ENCODE measurements at regions of chr11 and their contacts with region 1.

Region 1: GRCh38 chr11:62753736-62754603 is at the start of gene ZBTB3:
- DNase-seq: peak; percentile 99
- ATAC-seq: peak; percentile 96
- H3K4me3 ChIP-seq: peak within 1 kb of the TSS; percentile 55 to 86 (median 81)
- H3K27ac ChIP-seq: peak within 1 kb of the TSS; percentile 75
- H3K4me1 ChIP-seq: peaks cover 35% of the 10 kb centered on the region
- H3K27me3 ChIP-seq: no peaks in the 10 kb centered on the region
- CTCF ChIP-seq: peak; percentile 29; the same call in 1 of the 2 replicates
- EP300 ChIP-seq: no peak
- POLR2A ChIP-seq: peak; percentile 83 to 88
- RAD21 ChIP-seq: no peak; the same call in 1 of the 2 replicates
- total RNA-seq, gene ZBTB3: 4.0 and 5.2 TPM in 2 replicates

Region 2: DNA sequence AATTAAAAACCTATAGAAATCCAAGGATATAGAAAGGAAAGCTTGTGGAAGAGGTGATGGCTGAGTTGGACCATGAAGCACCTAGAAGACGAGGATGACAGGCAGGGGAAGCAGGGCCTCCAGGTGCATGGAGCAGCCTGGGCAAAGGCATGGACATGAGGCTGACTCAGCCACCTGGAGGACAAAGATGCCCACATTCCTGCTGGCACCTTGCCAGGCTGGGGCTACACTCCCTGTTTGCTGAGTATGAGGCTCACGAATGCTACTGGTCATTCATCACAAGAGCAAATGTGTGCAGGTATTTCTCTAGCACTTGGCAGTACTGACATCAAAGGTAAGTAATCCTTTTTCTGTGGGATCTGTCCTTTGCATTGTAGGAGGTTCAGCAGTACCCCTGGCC is 552.6 kb before region 1 on chr11:
- CTCF ChIA-PET with region 1: no interaction called
- POLR2A ChIA-PET with region 1: no interaction called
- in situ Hi-C with region 1: no loop called
- intact Hi-C with region 1: no loop called
- DNase-seq: no peak
- ATAC-seq: no peak
- H3K4me3 ChIP-seq: no peak overlapping the region
- H3K27ac ChIP-seq: no peak overlapping the region
- H3K4me1 ChIP-seq: no peaks in the 10 kb centered on the region
- H3K27me3 ChIP-seq: peaks cover 0 to 39% of the 10 kb centered on the region in 2 experiments
- CTCF ChIP-seq: no peak
- EP300 ChIP-seq: no peak
- POLR2A ChIP-seq: no peak
- RAD21 ChIP-seq: no peak

Region 3: DNA sequence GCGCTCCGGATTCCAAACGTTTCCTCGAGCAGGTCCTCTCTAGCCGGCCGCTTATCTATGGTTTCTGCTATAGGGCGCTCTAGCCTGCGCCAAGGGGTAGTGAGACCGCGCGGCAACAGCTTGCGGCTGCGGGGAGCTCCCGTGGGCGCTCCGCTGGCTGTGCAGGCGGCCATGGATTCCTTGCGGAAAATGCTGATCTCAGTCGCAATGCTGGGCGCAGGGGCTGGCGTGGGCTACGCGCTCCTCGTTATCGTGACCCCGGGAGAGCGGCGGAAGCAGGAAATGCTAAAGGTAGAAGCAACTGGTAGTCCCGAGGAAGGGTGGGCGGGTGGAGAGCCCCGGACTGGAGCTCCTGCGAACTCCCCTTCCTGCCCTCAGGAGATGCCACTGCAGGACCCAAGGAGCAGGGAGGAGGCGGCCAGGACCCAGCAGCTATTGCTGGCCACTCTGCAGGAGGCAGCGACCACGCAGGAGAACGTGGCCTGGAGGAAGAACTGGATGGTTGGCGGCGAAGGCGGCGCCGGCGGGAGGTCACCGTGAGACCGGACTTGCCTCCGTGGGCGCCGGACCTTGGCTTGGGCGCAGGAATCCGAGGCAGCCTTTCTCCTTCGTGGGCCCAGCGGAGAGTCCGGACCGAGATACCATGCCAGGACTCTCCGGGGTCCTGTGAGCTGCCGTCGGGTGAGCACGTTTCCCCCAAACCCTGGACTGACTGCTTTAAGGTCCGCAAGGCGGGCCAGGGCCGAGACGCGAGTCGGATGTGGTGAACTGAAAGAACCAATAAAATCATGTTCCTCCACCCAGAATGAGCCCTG is 82.2 kb before region 1 on chr11 and contains the starts of genes LBHD1 and UQCC3:
- CTCF ChIA-PET with region 1: no interaction called
- POLR2A ChIA-PET with region 1: interaction called, 11 read pairs
- in situ Hi-C with region 1: no loop called
- intact Hi-C with region 1: no loop called
- DNase-seq: peak; percentile 79
- ATAC-seq: peak; percentile 83
- H3K4me3 ChIP-seq: peak within 1 kb of the TSS; percentile 76 to 98 (median 91)
- H3K27ac ChIP-seq: peak within 1 kb of the TSS; percentile 90
- H3K4me1 ChIP-seq: peaks cover 59% of the 10 kb centered on the region
- H3K27me3 ChIP-seq: no peaks in the 10 kb centered on the region; a peak in 1 of 5 replicates
- CTCF ChIP-seq: no peak; the same call in none of the 2 replicates
- EP300 ChIP-seq: peak in 1 of 2 experiments; percentile 21; a peak in 1 of 4 replicates
- POLR2A ChIP-seq: peak; percentile 80 to 82
- RAD21 ChIP-seq: no peak
- total RNA-seq, gene LBHD1: 1.4 and 3.7 TPM in 2 replicates
- total RNA-seq, gene UQCC3: 12.1 and 16.0 TPM in 2 replicates

Region 4: DNA sequence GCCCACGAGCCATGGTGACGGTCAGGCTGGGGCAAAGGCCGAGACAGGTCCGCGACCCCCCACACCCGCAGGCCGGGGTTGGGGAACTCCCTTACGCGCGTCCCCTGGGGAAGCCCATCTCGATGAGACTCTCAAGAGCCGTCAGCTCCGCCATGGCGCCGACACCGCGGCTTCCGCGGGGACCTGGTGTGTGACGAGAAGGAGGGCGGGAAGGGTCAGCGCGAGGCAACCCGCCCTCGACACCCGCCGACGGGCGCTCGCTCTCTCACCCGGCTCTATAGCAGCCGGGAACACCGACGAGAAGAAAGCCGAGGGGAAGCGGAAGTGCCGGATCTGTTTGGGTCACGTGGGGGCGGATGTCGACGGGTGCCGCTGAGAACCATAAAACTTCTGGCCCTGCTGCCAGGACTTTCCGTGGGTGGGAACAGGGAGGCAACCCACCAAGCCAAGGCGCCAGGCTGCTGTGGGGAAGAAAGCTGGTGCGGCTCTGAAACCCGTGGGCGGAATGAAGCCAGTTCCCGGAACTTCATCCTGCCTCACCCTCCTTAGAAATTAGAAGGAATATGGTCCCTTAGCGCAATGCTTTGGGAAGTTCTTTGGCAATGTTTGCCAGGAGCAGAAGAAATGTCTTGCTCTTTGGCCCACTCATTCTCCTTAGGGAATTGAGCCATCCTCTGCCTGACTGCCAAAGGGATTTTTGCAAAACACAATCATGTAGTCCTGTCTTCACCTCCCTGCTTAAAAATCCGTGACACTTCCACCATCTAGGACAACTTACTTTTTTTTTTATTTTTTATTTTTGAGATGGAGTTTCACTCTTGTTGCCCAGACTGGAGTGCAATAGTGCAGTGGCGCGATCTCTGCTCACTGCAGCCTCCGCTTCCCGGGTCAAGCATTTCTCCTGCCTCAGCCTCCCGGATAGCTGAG is 74.9 kb before region 1 on chr11 and contains the start of gene UBXN1:
- CTCF ChIA-PET with region 1: no interaction called
- POLR2A ChIA-PET with region 1: interaction called, 12 read pairs
- in situ Hi-C with region 1: no loop called
- intact Hi-C with region 1: no loop called
- DNase-seq: peak; percentile 79
- ATAC-seq: peak; percentile 79
- H3K4me3 ChIP-seq: peak within 1 kb of the TSS; percentile 88 to 98 (median 94)
- H3K27ac ChIP-seq: peak within 1 kb of the TSS; percentile 86
- H3K4me1 ChIP-seq: peaks cover 37% of the 10 kb centered on the region
- H3K27me3 ChIP-seq: no peaks in the 10 kb centered on the region
- CTCF ChIP-seq: no peak
- EP300 ChIP-seq: no peak
- POLR2A ChIP-seq: peak; percentile 72 to 79
- RAD21 ChIP-seq: no peak; the same call in 1 of the 2 replicates
- total RNA-seq, gene UBXN1: 52.4 and 58.9 TPM in 2 replicates

Region 5: GRCh38 chr11:62689421-62690183 is 64.4 kb before region 1 on chr11 and contains the start of gene LRRN4CL:
- CTCF ChIA-PET with region 1: no interaction called
- POLR2A ChIA-PET with region 1: no interaction called
- in situ Hi-C with region 1: no loop called
- intact Hi-C with region 1: no loop called
- DNase-seq: no peak
- ATAC-seq: peak; percentile 13; the same call in 1 of the 3 replicates
- H3K4me3 ChIP-seq: no peak within 1 kb of the TSS
- H3K27ac ChIP-seq: no peak within 1 kb of the TSS
- H3K4me1 ChIP-seq: no peaks in the 10 kb centered on the region
- H3K27me3 ChIP-seq: no peaks in the 10 kb centered on the region
- CTCF ChIP-seq: no peak
- EP300 ChIP-seq: no peak
- POLR2A ChIP-seq: 0 out of 4 replicates have a peak, but pooled peaks of 1 of the 2 experiments have one; percentile 18
- RAD21 ChIP-seq: no peak
- total RNA-seq, gene LRRN4CL: 0.11 TPM in 1 of 2 replicates, not detected in the other

Region 6: DNA sequence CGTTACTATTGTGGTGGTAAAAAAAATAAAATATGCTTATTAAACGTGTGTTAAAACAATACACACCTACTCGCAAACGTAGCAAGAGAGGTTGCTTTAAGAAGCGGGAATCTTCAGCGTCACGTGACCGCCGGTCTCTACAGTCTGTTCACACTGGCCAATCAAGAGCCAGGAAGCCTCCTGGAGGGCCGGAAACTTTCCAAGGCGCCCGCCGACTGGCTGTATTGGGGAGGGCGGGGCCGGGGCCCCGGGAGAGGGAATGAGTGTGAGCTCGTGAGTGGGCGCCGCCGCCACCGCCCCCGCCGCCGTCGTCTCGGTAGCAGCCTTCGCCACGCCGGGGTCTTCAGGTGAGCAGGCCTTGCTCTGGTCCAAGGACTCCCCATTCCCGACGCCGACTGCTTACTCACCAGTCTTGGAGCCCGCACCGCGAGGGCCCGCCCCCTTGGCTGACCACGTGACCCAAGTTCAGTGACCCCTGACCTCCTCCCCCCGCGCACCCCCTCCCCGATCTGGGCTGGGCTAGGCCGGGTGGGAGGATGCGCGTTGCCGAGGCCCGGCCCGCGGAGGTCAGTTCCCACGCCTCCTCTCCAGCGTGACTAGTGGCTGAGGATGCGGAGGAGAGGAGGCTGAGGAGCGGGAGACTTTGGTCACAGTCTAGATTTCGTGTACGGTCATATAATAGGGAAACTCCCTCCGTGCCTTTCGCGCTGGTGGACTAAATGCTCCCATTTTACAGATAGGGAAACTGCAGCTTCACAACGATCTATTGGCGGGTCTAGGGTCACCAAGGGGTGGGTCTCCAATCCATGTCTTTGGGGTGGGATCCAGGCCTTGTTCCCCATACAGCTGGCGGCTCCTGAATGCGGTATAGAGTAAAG is 17.4 kb after region 1 on chr11 and contains the start of gene TAF6L:
- CTCF ChIA-PET with region 1: no interaction called
- POLR2A ChIA-PET with region 1: interaction called, 68 read pairs
- in situ Hi-C with region 1: no loop called
- intact Hi-C with region 1: no loop called
- DNase-seq: peak; percentile 97
- ATAC-seq: peak; percentile 93
- H3K4me3 ChIP-seq: peak within 1 kb of the TSS; percentile 64 to 78 (median 65)
- H3K27ac ChIP-seq: peak within 1 kb of the TSS; percentile 92
- H3K4me1 ChIP-seq: peaks cover 23% of the 10 kb centered on the region
- H3K27me3 ChIP-seq: no peaks in the 10 kb centered on the region; a peak in 1 of 5 replicates
- CTCF ChIP-seq: 0 out of 2 replicates have a peak, but pooled peaks have one; percentile 8
- EP300 ChIP-seq: no peak
- POLR2A ChIP-seq: peak; percentile 60 to 88; a peak in 3 of 4 replicates
- RAD21 ChIP-seq: no peak; the same call in 1 of the 2 replicates
- total RNA-seq, gene TAF6L: 13.4 and 19.4 TPM in 2 replicates

Region 7: GRCh38 chr11:62831520-62832335 is 77.8 kb after region 1 on chr11 and contains the start of gene STX5:
- CTCF ChIA-PET with region 1: no interaction called
- POLR2A ChIA-PET with region 1: interaction called, 21 read pairs
- in situ Hi-C with region 1: no loop called
- intact Hi-C with region 1: no loop called
- DNase-seq: peak; percentile 97
- ATAC-seq: peak; percentile 90
- H3K4me3 ChIP-seq: peak within 1 kb of the TSS; percentile 78 to 100 (median 99)
- H3K27ac ChIP-seq: peak within 1 kb of the TSS; percentile 95
- H3K4me1 ChIP-seq: peaks cover 32% of the 10 kb centered on the region
- H3K27me3 ChIP-seq: no peaks in the 10 kb centered on the region; a peak in 1 of 5 replicates
- CTCF ChIP-seq: no peak
- EP300 ChIP-seq: no peak
- POLR2A ChIP-seq: peak; percentile 79 to 88
- RAD21 ChIP-seq: no peak
- total RNA-seq, gene STX5: 26.9 and 29.2 TPM in 2 replicates

Region 8: GRCh38 chr11:62880803-62881578 is 127.0 kb after region 1 on chr11 and contains the start of gene SLC3A2:
- CTCF ChIA-PET with region 1: no interaction called
- POLR2A ChIA-PET with region 1: interaction called, 16 read pairs
- in situ Hi-C with region 1: no loop called
- intact Hi-C with region 1: no loop called
- DNase-seq: peak; percentile 74
- ATAC-seq: peak; percentile 91
- H3K4me3 ChIP-seq: peak within 1 kb of the TSS; percentile 92 to 99 (median 94)
- H3K27ac ChIP-seq: peak within 1 kb of the TSS; percentile 93
- H3K4me1 ChIP-seq: peaks cover 56% of the 10 kb centered on the region
- H3K27me3 ChIP-seq: no peaks in the 10 kb centered on the region; a peak in 1 of 5 replicates
- CTCF ChIP-seq: peak; percentile 94
- EP300 ChIP-seq: no peak
- POLR2A ChIP-seq: peak; percentile 96 to 98
- RAD21 ChIP-seq: peak; percentile 84
- total RNA-seq, gene SLC3A2: 94.8 and 213 TPM in 2 replicates

Measured in HepG2 (cell line).